Activated T-helper 1 cell treated with anti-CD3 and anti-CD28 coated beads, Interleukin-12 subunit alpha, Interleukin-12 subunit beta, Interleukin-2, Interleukin-4 antibody, amounts not matched to agents 30 ng/mL and 10 ng/mL and 1 ng/mL, durations not matched to agents 14 hours and 24 hours and 36 hours (primary cell): ENCODE measurements at regions of chr7 and their contacts with region 1.

Region 1: DNA sequence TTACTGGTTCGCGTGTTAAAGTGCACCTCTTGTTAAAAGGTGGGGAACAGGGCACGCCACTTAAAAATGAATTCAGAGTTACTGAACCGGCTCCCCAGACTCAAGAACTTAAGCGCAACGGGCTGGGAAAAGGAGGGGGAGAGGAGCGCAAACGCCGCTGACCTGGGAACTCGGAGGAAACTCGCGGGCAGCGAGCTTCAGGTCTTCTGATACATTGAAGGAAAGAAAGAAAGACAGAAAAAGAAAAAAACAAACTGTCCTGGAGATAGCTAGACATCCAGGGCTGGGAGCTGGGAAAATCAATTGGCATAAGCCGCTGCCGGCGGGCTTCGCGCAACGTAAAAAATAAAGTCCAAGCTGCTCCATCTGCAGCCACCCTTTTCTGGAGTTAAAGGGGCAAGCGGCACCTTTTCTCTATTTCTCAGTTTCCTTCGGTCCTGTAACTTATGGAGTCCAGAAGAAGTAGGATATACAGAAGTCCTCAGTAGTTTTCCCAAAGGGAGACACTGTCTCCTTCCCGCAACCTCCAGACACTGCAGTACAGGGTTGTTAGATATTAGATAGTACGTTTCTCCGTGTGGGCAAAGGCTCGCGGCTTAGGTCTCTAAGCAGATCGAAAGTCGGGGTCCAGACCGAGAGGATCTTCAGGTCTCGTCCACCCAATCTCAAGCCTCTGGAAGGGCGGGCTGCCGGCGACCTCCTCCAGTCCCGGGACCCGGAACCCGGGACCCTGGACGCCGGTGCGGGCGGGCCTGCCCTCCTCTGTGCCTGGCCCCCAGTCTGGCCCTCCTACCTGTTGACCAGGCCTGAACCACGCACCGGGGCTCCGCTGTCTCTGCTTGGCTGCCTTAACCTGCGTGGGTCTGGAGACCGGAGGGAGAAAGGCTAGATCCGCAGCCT is 1.8 kb upstream of the DLX6 start:
- DNase-seq: no peak
- H3K4me3 Mint-ChIP-seq: no peak overlapping the region
- H3K27ac Mint-ChIP-seq: peak overlapping the region; percentile 43
- H3K4me1 Mint-ChIP-seq: no peaks in the 10 kb centered on the region
- H3K27me3 Mint-ChIP-seq: peaks cover 84% of the 10 kb centered on the region

Region 2: GRCh38 chr7:97016381-97017191 is 13.0 kb after region 1 on chr7:
- intact Hi-C with region 1: loop called (anchors 1 kb)
- DNase-seq: no peak
- H3K4me3 Mint-ChIP-seq: no peak overlapping the region
- H3K27ac Mint-ChIP-seq: no peak overlapping the region
- H3K4me1 Mint-ChIP-seq: no peaks in the 10 kb centered on the region
- H3K27me3 Mint-ChIP-seq: peaks cover 86% of the 10 kb centered on the region

Region 3: DNA sequence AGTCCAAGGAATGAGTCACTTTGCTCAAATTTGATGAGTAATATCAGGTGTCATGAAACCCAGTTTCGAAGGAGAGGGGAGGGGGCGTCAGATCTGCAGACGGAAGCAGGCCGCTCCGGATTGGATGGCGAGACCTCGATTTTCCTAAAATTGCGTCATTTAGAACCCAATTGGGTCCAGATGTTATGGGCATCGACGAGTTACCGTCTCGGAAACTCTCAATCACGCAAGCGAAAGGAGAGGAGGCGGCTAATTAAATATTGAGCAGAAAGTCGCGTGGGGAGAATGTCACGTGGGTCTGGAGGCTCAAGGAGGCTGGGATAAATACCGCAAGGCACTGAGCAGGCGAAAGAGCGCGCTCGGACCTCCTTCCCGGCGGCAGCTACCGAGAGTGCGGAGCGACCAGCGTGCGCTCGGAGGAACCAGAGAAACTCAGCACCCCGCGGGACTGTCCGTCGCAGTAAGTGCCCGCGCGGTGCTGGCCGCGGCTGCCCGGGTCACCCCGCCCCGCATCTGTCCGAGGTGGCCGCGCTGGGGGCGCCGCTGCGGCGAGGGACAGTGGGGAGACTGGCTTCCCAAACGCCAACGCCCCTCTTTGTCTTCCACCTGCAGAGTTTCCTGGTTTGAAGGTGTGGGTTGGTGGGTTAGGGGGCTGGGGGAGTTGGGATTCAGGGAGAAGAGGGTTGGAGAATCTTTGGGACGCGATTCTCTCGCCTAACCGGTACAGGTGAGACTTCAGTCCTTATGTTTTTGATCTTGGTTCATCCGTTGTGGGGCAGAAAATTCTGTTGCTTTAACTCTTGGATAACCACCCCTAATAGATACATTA is 728.4 kb after region 1 on chr7 and contains the start of gene TAC1:
- intact Hi-C with region 1: loop called (anchors 5 kb)
- DNase-seq: no peak
- H3K4me3 Mint-ChIP-seq: no peak within 1 kb of the TSS
- H3K27ac Mint-ChIP-seq: no peak within 1 kb of the TSS
- H3K4me1 Mint-ChIP-seq: no peaks in the 10 kb centered on the region
- H3K27me3 Mint-ChIP-seq: peaks cover 50% of the 10 kb centered on the region
- total RNA-seq, gene TAC1: 0.31 and 0.51 TPM in 2 replicates